IMR-90 (cell line): ENCODE measurements at regions of chr11 and their contacts with region 1.

Region 1: GRCh38 chr11:26778000-26778757 is 56.3 kb upstream of the SLC5A12 start:
- DNase-seq: peak; percentile 81
- ATAC-seq: peak; percentile 86
- H3K4me3 ChIP-seq: peak overlapping the region; percentile 13; the same call in 1 of the 2 replicates
- H3K27ac ChIP-seq: peak overlapping the region; percentile 70; the same call in 1 of the 2 replicates
- H3K4me1 ChIP-seq: peaks cover 12% of the 10 kb centered on the region
- H3K27me3 ChIP-seq: no peaks in the 10 kb centered on the region
- CTCF ChIP-seq: no peak
- POLR2A ChIP-seq: no peak
- RAD21 ChIP-seq: no peak

Region 2: DNA sequence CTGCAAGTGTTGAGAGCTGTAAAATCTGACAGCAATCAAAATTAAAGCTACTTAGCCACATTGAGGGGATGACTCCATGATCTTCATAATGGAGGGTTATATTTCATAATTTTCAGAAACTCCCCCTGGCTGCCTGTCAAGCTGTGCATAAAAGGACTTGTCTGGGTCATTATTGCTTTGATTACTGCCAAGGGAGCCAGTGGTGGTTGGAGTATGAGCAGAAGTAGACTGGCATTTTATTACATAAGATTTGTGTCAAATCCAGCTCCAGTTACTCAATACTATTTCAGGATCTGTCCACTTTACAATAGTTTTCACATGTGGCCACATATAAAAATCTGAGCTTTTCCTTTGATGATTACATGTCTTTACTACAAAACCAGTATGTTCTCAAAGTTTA is 52.6 kb after region 1 on chr11:
- CTCF ChIA-PET with region 1: no interaction called
- POLR2A ChIA-PET with region 1: no interaction called
- dilution Hi-C with region 1: no loop called
- in situ Hi-C with region 1: no loop called
- intact Hi-C with region 1: loop called (anchors 5 kb)
- DNase-seq: no peak
- ATAC-seq: no peak
- H3K4me3 ChIP-seq: no peak overlapping the region
- H3K27ac ChIP-seq: no peak overlapping the region
- H3K4me1 ChIP-seq: peaks cover 2% of the 10 kb centered on the region; the same call in 1 of the 2 replicates
- H3K27me3 ChIP-seq: no peaks in the 10 kb centered on the region
- CTCF ChIP-seq: no peak
- POLR2A ChIP-seq: no peak
- RAD21 ChIP-seq: no peak

Region 3: GRCh38 chr11:26993965-26994457 is 215.8 kb after region 1 on chr11 and contains the start of gene FIBIN:
- CTCF ChIA-PET with region 1: no interaction called
- POLR2A ChIA-PET with region 1: interaction called, 3 read pairs
- dilution Hi-C with region 1: no loop called
- in situ Hi-C with region 1: no loop called
- intact Hi-C with region 1: loop called (anchors 5 kb)
- DNase-seq: peak; percentile 70
- ATAC-seq: peak; percentile 56
- H3K4me3 ChIP-seq: peak within 1 kb of the TSS; percentile 78
- H3K27ac ChIP-seq: peak within 1 kb of the TSS; percentile 95
- H3K4me1 ChIP-seq: peaks cover 11% of the 10 kb centered on the region
- H3K27me3 ChIP-seq: no peaks in the 10 kb centered on the region
- CTCF ChIP-seq: no peak
- POLR2A ChIP-seq: no peak
- RAD21 ChIP-seq: no peak
- total RNA-seq, gene FIBIN: 5.7 and 7.5 TPM in 2 replicates